Naive thymus-derived CD4-positive, alpha-beta T cell (primary cell): ENCODE measurements at regions of chr12 and their contacts with region 1.

Region 1: DNA sequence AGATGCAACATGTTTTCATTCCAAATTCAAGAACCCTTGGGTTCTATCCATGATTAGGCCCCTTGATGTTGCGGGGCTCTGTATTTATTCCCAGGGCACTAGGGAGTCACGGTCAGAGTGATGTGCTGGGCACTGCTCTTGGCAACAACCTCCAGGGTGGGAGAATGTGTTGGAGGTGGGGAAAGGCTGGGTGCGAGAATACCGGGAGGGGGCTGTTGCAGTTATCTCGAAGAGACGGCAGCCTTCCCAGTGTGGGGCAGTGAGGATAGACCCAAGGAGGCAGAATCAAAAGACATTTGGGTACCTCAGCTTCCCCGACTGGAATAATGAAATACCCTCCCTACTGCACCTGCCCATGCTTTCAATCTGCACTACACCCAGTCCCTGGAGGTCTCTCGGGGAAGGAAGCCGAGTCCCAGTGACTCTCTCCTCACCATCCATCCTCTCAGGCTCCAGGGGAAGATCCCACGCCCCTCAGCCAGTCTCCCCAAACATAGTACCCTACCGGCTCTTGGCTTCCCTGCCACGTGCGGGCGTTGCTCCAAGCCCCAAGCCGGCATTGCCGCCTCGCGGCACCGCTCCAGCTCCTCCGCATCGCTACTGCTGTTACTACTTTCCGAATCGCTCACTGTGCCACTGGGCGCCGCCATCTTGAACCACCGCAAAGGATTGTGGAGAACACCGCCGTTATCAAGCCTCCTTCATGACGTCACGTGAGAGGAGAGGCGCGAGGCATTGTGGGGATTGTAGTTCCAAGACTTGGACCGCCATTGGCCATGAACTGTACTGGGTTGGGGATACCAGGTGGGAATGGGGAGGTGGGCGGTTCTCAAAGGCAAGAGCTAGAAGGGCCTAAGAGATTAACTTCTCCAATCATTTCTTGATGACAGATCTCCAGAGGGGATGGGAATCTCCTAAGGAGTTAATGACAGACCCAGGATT is at the start of gene C12orf43:
- DNase-seq: peak; percentile 74 to 93 (median 89)
- ATAC-seq: peak; percentile 99
- H3K4me3 ChIP-seq: peak within 1 kb of the TSS; percentile 88
- H3K4me3 Mint-ChIP-seq: peak within 1 kb of the TSS; percentile 93 to 99 (median 96)
- H3K27ac ChIP-seq: peak within 1 kb of the TSS; percentile 88
- H3K27ac Mint-ChIP-seq: peak within 1 kb of the TSS; percentile 89 to 97 (median 95)
- H3K4me1 ChIP-seq: peaks cover 6 to 11% of the 10 kb centered on the region in 2 donors
- H3K4me1 Mint-ChIP-seq: peaks cover 17 to 32% (median 24%) of the 10 kb centered on the region in 7 donors
- H3K27me3 ChIP-seq: no peaks in the 10 kb centered on the region
- H3K27me3 Mint-ChIP-seq: no peaks in the 10 kb centered on the region
- total RNA-seq, gene C12orf43: 11.8 to 24.2 (median 17.5) TPM

Region 2: DNA sequence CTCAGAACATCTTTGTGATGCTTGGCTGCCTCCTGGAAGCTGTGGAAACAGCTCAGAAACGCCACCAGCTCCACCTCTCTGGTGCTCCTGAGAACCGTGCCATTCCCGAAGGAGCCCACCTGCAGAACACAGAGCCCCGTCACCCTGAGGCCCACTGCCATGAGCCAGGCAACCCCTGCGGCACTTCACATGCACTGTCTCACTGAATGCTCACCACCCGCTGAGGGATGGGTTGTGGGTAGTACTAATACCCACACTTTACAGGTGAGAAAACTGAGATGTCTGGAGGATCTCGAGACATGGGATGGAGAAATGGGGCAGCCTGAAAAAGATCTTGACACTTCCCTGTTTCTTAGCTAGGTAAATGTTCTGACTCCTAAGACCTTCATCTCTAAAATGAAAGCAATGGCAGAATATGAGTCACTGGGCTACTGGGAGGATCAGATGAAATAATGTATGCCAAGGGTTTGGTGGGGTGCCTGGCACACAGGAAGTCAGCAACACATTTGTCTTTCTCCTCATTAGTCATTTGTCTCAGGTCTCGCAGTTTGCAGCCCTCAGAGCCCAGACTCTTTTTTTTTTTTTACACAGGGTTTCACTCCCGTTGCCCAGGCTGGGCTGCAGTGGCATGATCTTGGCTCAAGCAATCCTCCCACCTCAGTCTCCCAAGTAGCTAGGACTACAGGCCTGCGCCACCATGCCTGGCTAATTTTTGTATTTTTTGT is 17.7 kb after region 1 on chr12:
- CTCF ChIA-PET with region 1: interaction called, 3 read pairs
- POLR2A ChIA-PET with region 1: interaction called, 4 read pairs
- intact Hi-C with region 1: loop called in 1 of 2 experiments (anchors 1 kb)
- DNase-seq: peak in 3 of 9 donors; percentile 13 to 43 (median 16)
- ATAC-seq: peak; percentile 81
- H3K4me3 ChIP-seq: peak overlapping the region; percentile 26
- H3K4me3 Mint-ChIP-seq: peak overlapping the region in 8 of 10 donors; percentile 5 to 72 (median 28)
- H3K27ac ChIP-seq: no peak overlapping the region
- H3K27ac Mint-ChIP-seq: peak overlapping the region in 8 of 9 donors; percentile 59 to 93 (median 82)
- H3K4me1 ChIP-seq: peaks cover 48 to 51% of the 10 kb centered on the region in 2 donors
- H3K4me1 Mint-ChIP-seq: peaks cover 29 to 52% (median 44%) of the 10 kb centered on the region in 7 donors
- H3K27me3 ChIP-seq: no peaks in the 10 kb centered on the region
- H3K27me3 Mint-ChIP-seq: no peaks in the 10 kb centered on the region

Region 3: DNA sequence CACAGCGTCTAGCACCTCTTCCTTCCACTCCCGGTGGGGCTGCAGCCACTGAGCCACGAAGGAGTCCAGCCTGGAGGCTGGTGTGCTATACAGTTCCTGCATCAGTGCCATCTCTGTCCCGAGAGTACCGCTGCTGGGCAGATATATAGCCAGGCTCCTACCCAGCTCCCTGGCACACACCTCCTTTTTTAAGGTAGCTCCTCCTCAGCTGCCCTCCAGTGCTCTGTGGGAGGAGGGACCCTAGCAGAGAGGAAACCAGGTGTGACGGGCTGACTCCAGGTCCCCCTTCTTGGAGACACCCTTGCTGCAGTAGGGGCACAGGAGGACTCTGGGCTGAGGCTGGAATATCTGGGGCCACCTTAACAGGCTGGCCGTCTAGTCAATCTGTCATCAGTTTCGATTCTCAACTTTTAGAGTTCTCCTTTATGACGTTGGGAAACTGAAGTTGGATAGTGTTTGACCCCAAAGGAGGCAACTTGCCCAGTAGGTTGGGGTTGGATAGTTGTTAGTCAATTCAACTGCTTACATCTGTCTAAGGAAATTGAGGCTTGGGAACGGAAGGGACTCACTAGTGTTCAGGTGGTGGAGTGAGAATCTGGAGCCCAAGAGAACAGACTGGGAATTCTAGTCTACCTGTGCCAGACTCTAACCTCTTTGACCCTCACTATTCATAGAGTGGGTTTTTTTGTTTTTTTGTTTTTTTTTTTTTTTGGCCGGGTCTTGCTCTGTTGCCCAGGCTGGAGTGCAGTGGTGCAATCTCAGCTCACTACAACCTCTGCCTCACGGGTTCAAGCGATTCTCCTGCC is 23.0 kb after region 1 on chr12 and contains the start of gene OASL:
- CTCF ChIA-PET with region 1: no interaction called
- POLR2A ChIA-PET with region 1: interaction called, 4 read pairs
- intact Hi-C with region 1: loop called (anchors 1 kb)
- DNase-seq: peak; percentile 31 to 50 (median 43)
- ATAC-seq: peak; percentile 84
- H3K4me3 ChIP-seq: peak within 1 kb of the TSS; percentile 70
- H3K4me3 Mint-ChIP-seq: peak within 1 kb of the TSS; percentile 89 to 99 (median 96)
- H3K27ac ChIP-seq: peak within 1 kb of the TSS; percentile 68
- H3K27ac Mint-ChIP-seq: peak within 1 kb of the TSS; percentile 91 to 98 (median 95)
- H3K4me1 ChIP-seq: peaks cover 42 to 43% of the 10 kb centered on the region in 2 donors
- H3K4me1 Mint-ChIP-seq: peaks cover 27 to 49% (median 42%) of the 10 kb centered on the region in 7 donors
- H3K27me3 ChIP-seq: no peaks in the 10 kb centered on the region
- H3K27me3 Mint-ChIP-seq: peaks cover 0 to 18% (median 0%) of the 10 kb centered on the region in 5 donors
- total RNA-seq, gene OASL: 2.7 to 19.4 (median 4.3) TPM

Region 4: DNA sequence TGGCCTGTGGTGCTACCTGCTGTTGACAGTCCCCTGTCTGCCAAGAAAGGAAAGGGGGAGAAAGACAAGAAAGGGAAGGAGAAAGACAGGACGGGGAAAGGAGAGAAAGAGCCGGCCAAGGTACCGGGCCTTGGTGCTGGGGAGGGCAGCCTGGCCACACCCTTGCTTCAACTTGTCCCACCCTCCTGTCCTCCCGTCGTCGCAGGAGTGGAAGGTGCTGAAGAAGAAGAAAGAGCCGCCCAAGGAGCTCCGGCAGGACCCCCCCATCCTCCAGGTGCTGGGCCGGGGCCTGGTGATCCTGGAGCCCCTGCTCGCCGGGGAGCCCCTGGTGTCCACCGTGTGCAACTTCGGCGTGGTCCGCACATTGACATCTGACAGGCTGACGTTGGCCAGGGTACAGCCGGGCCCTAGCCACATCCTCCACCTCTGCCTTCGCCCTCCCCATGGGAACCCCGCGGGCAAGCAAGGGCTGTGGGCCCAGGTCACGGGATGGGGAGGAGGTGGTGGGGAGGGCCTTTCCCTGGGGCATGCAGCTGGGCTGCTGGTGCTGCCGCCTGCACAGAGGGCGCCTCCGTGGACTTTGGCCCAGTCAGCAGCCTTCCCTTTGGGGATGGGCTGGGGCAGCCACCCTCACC is 1184.6 kb after region 1 on chr12:
- CTCF ChIA-PET with region 1: no interaction called
- POLR2A ChIA-PET with region 1: no interaction called
- intact Hi-C with region 1: no loop called
- DNase-seq: no peak
- ATAC-seq: no peak
- H3K4me3 ChIP-seq: no peak overlapping the region
- H3K4me3 Mint-ChIP-seq: no peak overlapping the region
- H3K27ac ChIP-seq: no peak overlapping the region
- H3K27ac Mint-ChIP-seq: peak overlapping the region in 1 of 9 donors; percentile 46
- H3K4me1 ChIP-seq: peaks cover 6 to 10% of the 10 kb centered on the region in 2 donors
- H3K4me1 Mint-ChIP-seq: peaks cover 6 to 18% (median 14%) of the 10 kb centered on the region in 7 donors
- H3K27me3 ChIP-seq: peaks cover 0 to 3% of the 10 kb centered on the region in 2 donors
- H3K27me3 Mint-ChIP-seq: peaks cover 0 to 49% (median 12%) of the 10 kb centered on the region in 5 donors